ENCODE measurements at regions of chr22 and their contacts with region 1.

Region 1: DNA sequence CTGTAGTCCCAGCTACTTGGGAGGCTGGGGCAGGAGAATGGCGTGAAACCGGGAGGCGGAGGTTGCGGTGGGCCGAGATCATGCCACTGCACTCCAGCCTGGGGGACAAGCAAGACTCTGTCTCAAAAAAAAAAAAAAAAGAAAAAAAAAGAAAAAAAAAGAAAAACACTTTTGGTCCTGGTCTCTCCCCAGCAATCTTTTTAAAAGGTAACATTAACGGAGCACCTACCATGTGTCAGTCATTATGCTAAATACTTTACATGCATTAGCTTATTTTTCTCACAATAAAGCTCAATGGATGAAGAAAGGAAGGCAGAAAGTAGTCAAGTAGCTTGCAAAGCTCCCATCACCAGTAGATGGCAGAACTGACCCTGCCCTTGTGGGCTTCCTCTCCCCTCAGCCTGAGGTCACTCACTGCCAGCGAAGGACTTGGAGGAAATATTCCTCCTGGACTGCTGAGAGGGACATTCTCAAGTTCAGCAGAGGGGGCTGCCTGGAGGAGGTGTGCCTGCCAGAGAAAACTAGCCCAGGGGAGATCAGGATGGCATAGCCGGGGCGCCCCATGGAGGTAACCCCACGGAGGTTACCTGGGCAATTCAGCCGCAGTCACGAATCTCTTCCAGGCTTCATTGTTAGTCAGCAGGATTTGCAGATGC is 15.5 kb downstream of the APOL3 start:
- DNase-seq: peak; percentile 63
- ATAC-seq: peak; percentile 78
- H3K4me3 Mint-ChIP-seq: no peak overlapping the region
- H3K27ac Mint-ChIP-seq: no peak overlapping the region
- H3K4me1 Mint-ChIP-seq: peaks cover 24% of the 10 kb centered on the region
- H3K27me3 Mint-ChIP-seq: no peaks in the 10 kb centered on the region
- CTCF ChIP-seq: peak; percentile 80

Region 2: DNA sequence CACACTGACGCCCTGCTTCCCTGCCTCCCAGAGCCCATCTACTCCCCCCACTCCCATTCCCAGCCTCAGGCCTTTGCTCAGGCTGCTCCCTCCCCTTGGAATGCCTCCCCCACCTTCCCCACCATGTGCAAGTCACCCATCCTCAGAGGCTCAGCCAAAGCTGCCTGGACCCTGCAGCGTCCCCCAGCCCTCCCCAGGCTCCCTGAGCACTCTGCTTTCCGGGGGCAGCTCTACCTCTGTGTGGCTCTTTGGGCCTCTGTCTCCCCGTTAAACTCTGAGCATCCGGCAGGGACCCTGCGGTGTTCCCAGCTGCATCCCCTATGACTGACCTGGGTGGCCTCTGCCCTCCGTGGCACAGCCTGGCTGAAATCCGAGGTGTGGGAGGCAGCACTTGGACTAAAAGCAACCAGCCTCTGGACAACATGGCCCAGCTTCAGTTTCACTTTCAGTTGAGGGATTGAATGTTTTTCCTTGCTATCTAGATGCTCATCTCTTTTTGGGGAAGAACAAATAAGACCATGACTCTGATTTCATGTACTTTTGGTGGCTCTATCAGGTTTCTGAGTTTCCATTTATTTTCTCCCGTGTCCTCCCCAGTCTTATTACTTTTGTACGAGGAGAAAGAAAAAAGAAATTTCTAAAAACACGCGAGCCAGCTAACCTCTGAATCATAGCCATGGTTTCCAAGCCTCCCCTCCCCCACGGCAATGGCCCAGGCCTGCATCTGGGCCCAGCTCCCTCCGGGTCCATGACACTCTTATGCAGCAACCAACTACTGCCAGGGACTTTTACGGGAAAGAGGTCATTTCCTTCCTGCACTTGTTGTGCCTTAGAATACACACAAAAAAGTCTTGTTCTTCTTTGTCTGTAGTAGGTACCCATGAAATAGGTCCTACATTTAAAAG is 11.8 kb after region 1 on chr22:
- CTCF ChIA-PET with region 1: interaction called, 17 read pairs
- POLR2A ChIA-PET with region 1: interaction called, 4 read pairs
- intact Hi-C with region 1: no loop called
- DNase-seq: peak; percentile 88
- ATAC-seq: peak; percentile 50
- H3K4me3 Mint-ChIP-seq: peak overlapping the region; percentile 89
- H3K27ac Mint-ChIP-seq: peak overlapping the region; percentile 99
- H3K4me1 Mint-ChIP-seq: peaks cover 87% of the 10 kb centered on the region
- H3K27me3 Mint-ChIP-seq: no peaks in the 10 kb centered on the region
- CTCF ChIP-seq: no peak